Caco-2 (cell line): ENCODE measurements at regions of chr4 and their contacts with region 1.

Region 1: GRCh38 chr4:184474263-184475095 is at the start of gene IRF2:
- DNase-seq: peak; percentile 94 to 96
- H3K4me3 ChIP-seq: peak within 1 kb of the TSS; percentile 70
- H3K4me3 Mint-ChIP-seq: peak within 1 kb of the TSS; percentile 98
- H3K27ac Mint-ChIP-seq: peak within 1 kb of the TSS; percentile 89
- H3K4me1 ChIP-seq: peaks cover 2% of the 10 kb centered on the region
- H3K4me1 Mint-ChIP-seq: peaks cover 20% of the 10 kb centered on the region
- H3K27me3 ChIP-seq: no peaks in the 10 kb centered on the region
- H3K27me3 Mint-ChIP-seq: no peaks in the 10 kb centered on the region
- CTCF ChIP-seq: no peak
- total RNA-seq, gene IRF2: 9.2 and 11.5 TPM in 2 replicates

Region 2: GRCh38 chr4:184275766-184276165 is 198.7 kb before region 1 on chr4:
- CTCF ChIA-PET with region 1: no interaction called
- POLR2A ChIA-PET with region 1: no interaction called
- intact Hi-C with region 1: no loop called
- DNase-seq: no peak
- H3K4me3 ChIP-seq: no peak overlapping the region
- H3K4me3 Mint-ChIP-seq: no peak overlapping the region
- H3K27ac Mint-ChIP-seq: no peak overlapping the region
- H3K4me1 ChIP-seq: no peaks in the 10 kb centered on the region
- H3K4me1 Mint-ChIP-seq: no peaks in the 10 kb centered on the region
- H3K27me3 ChIP-seq: no peaks in the 10 kb centered on the region
- H3K27me3 Mint-ChIP-seq: peaks cover under 1% of the 10 kb centered on the region
- CTCF ChIP-seq: no peak

Region 3: DNA sequence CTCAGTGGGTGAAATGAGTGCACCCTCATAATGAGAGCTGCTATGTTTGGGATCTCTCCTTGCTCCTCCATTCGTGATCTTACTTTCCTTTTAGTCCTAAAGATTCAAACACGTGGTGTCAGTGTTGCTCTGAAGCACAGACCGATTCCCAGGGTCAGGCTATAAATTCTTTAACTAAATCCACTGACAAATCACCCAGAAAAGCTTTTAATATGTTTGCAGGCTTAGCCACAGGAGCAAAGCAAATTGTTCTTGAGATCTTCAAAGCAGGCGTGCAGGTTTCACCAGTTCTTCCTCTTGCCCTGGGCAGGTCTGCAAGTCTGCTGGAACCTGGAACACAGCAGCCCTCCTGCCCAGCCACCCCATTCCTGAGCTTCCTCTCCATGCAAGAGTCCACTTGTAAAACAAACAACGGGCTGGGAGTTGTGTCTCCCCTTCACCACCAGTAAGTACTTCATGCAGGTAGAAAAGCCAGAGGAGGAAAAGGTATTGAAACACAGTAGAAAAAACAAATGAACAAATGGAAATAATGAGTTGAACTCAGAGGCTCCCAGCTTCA is 186.7 kb before region 1 on chr4:
- CTCF ChIA-PET with region 1: interaction called, 11 read pairs
- POLR2A ChIA-PET with region 1: interaction called, 9 read pairs
- intact Hi-C with region 1: loop called (anchors 1 kb)
- DNase-seq: peak; percentile 82 to 83
- H3K4me3 ChIP-seq: no peak overlapping the region
- H3K4me3 Mint-ChIP-seq: peak overlapping the region; percentile 27
- H3K27ac Mint-ChIP-seq: peak overlapping the region; percentile 62
- H3K4me1 ChIP-seq: peaks cover 18% of the 10 kb centered on the region
- H3K4me1 Mint-ChIP-seq: peaks cover 13% of the 10 kb centered on the region
- H3K27me3 ChIP-seq: no peaks in the 10 kb centered on the region
- H3K27me3 Mint-ChIP-seq: no peaks in the 10 kb centered on the region
- CTCF ChIP-seq: no peak

Region 4: GRCh38 chr4:184461711-184462441 is 12.6 kb before region 1 on chr4:
- CTCF ChIA-PET with region 1: interaction called, 8 read pairs
- POLR2A ChIA-PET with region 1: interaction called, 18 read pairs
- intact Hi-C with region 1: loop called (anchors 1 kb)
- DNase-seq: no peak
- H3K4me3 ChIP-seq: no peak overlapping the region
- H3K4me3 Mint-ChIP-seq: no peak overlapping the region
- H3K27ac Mint-ChIP-seq: peak overlapping the region; percentile 57
- H3K4me1 ChIP-seq: peaks cover 32% of the 10 kb centered on the region
- H3K4me1 Mint-ChIP-seq: peaks cover 36% of the 10 kb centered on the region
- H3K27me3 ChIP-seq: no peaks in the 10 kb centered on the region
- H3K27me3 Mint-ChIP-seq: no peaks in the 10 kb centered on the region
- CTCF ChIP-seq: no peak

Region 5: GRCh38 chr4:184649026-184649970 is 174.8 kb after region 1 on chr4 and contains the starts of genes CASP3 and PRIMPOL:
- CTCF ChIA-PET with region 1: no interaction called
- POLR2A ChIA-PET with region 1: no interaction called
- intact Hi-C with region 1: loop called (anchors 10 kb)
- DNase-seq: peak; percentile 95 to 97
- H3K4me3 ChIP-seq: peak within 1 kb of the TSS; percentile 63
- H3K4me3 Mint-ChIP-seq: peak within 1 kb of the TSS; percentile 88
- H3K27ac Mint-ChIP-seq: peak within 1 kb of the TSS; percentile 78
- H3K4me1 ChIP-seq: peaks cover 10% of the 10 kb centered on the region
- H3K4me1 Mint-ChIP-seq: peaks cover 14% of the 10 kb centered on the region
- H3K27me3 ChIP-seq: no peaks in the 10 kb centered on the region
- H3K27me3 Mint-ChIP-seq: no peaks in the 10 kb centered on the region
- CTCF ChIP-seq: peak in 1 of 2 experiments; percentile 26
- total RNA-seq, gene CASP3: 34.1 and 34.5 TPM in 2 replicates
- total RNA-seq, gene PRIMPOL: 7.5 and 7.9 TPM in 2 replicates